ENCODE measurements at regions of chr6 and their contacts with region 1.

Region 1: DNA sequence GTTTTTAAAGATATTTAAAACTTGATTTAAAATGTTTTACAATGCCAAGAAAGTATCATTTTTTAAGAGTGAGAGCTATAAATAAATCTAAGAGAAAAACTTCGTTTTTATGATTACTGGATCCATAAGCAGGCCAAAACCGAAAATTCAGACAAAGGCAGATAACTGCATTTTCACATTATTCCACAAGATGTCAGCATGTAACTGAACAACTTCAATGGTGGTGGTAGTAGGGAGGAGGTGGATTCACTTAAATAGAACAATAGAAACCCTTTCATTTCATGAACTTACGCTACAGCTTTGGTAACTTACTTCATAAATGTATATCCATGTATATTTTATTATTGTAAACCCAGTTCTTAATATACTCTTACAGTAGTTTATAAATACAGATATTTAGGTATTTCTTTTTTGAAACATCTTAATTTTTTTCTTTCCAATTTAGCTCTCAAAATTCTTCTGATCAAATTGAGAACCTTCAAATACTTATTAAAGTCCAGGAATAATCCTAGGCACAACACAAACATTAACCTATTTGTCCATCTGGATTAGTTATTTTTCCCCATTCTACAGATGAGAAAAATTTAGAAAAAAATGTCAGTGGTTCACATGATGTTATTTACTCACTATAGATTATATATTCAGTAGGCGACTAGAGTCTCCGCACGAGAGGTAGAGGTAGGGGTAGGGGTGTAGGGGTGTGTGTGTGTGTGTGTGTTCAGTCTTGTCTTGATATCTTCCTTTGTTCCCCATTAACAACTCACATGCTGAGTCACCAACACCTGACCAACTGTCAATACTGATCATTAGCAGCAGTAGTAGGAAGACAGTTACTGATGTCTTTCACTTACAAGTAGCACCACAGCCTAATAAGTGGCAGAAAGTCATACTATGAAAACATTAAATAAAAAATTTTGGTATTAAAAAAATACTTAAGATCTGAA is 111.5 kb downstream of the ARHGAP18 start:
- DNase-seq: no peak
- H3K4me3 ChIP-seq: no peak overlapping the region
- H3K27ac ChIP-seq: no peak overlapping the region
- H3K4me1 ChIP-seq: no peaks in the 10 kb centered on the region
- H3K27me3 ChIP-seq: no peaks in the 10 kb centered on the region
- CTCF ChIP-seq: peak; percentile 66 to 97 (median 88)
- POLR2A ChIP-seq: no peak

Region 2: GRCh38 chr6:129555206-129555832 is 43.2 kb before region 1 on chr6:
- intact Hi-C with region 1: no loop called
- DNase-seq: no peak
- H3K4me3 ChIP-seq: no peak overlapping the region
- H3K27ac ChIP-seq: no peak overlapping the region
- H3K4me1 ChIP-seq: no peaks in the 10 kb centered on the region
- H3K27me3 ChIP-seq: no peaks in the 10 kb centered on the region
- CTCF ChIP-seq: no peak
- POLR2A ChIP-seq: no peak

Region 3: DNA sequence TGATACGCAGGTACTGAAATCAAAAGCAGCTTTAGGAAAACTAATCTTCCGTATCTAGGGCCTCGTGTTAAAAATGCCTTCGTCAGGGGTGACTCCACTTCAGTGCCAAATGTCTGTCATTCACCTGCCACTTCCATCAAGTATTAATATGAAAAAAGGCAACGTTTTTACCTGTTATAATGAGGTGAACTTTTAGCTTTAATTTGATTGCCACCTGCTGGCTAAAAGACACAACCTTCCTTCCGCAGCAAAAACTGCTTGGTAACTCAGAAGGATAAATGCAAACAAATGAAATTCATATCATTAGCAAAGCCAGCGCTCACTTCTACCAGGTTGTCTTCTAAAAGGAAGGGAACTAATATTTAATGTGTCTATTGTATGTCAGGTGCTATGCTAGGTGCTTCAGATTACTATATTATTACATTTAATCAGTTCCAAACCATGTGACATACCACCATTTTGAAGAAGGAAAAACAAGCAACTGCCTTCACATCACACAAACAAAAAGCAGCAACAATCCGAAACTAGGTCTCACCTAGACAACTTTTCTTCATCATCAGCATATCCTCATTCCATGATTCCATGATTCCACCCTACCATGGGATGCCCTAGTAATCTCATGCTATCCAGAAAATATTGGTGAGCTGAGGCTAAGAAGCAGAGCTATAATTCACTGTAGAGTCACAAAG is 132.1 kb after region 1 on chr6:
- intact Hi-C with region 1: loop called (anchors 2 to 5 kb)
- DNase-seq: no peak
- H3K4me3 ChIP-seq: no peak overlapping the region
- H3K27ac ChIP-seq: no peak overlapping the region
- H3K4me1 ChIP-seq: peaks cover 0 to 25% of the 10 kb centered on the region in 2 donors
- H3K27me3 ChIP-seq: no peaks in the 10 kb centered on the region
- CTCF ChIP-seq: peak; percentile 19 to 72 (median 62)
- POLR2A ChIP-seq: no peak

Region 4: DNA sequence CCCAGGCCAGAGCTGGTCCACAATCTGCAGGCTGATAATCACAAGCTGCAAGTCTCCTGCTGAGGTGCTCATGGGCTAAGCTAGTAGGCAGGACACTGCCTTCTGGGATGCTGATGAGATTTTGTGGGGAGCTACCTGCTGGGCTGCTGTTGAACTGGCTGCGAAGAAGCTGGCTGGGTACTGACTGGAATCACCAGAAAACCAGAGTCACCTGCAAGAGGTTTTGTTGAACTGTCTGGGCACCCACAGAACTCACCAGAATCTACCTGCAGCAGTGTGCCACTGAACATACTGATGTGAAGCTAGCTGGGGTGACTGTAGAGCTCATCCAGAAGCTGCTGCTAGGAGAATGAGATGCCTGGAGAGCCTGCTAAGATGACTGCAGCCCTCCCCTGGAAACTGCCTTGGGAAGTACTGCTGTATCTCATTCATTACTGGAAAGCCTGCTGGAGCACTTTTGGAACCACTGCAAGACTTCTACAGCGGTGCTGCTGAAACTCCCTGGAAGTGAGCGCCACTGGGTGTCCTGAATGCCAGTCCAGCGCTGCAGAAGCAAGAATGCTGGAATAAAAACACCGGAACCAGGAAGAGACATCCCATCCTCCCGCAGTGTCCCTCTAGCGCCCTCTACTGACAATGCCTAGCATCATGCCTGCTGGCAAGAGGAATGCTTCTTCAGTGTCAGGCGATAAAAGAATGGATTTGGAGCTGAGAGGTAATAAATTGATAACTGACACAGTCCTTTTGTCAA is 176.4 kb after region 1 on chr6:
- intact Hi-C with region 1: loop called in 1 of 2 experiments (anchors 10 kb)
- DNase-seq: peak; percentile 75 to 90 (median 84)
- H3K4me3 ChIP-seq: peak overlapping the region in 1 of 4 donors; percentile 39
- H3K27ac ChIP-seq: no peak overlapping the region
- H3K4me1 ChIP-seq: no peaks in the 10 kb centered on the region
- H3K27me3 ChIP-seq: no peaks in the 10 kb centered on the region
- CTCF ChIP-seq: peak; percentile 86 to 99 (median 89)
- POLR2A ChIP-seq: no peak

Region 5: GRCh38 chr6:130020907-130021629 is 422.6 kb after region 1 on chr6:
- intact Hi-C with region 1: loop called (anchors 10 kb)
- DNase-seq: peak; percentile 88 to 96 (median 90)
- H3K4me3 ChIP-seq: peak overlapping the region in 3 of 4 donors; percentile 36 to 93 (median 87)
- H3K27ac ChIP-seq: peak overlapping the region; percentile 82 to 97 (median 95)
- H3K4me1 ChIP-seq: peaks cover 0 to 15% of the 10 kb centered on the region in 2 donors
- H3K27me3 ChIP-seq: no peaks in the 10 kb centered on the region
- CTCF ChIP-seq: peak; percentile 64 to 90 (median 88)
- POLR2A ChIP-seq: peak in 1 of 2 donors; percentile 71

Measured in adrenal gland (tissue), 19 donors.